ENCODE measurements at regions of chr11 and their contacts with region 1.

Region 1: DNA sequence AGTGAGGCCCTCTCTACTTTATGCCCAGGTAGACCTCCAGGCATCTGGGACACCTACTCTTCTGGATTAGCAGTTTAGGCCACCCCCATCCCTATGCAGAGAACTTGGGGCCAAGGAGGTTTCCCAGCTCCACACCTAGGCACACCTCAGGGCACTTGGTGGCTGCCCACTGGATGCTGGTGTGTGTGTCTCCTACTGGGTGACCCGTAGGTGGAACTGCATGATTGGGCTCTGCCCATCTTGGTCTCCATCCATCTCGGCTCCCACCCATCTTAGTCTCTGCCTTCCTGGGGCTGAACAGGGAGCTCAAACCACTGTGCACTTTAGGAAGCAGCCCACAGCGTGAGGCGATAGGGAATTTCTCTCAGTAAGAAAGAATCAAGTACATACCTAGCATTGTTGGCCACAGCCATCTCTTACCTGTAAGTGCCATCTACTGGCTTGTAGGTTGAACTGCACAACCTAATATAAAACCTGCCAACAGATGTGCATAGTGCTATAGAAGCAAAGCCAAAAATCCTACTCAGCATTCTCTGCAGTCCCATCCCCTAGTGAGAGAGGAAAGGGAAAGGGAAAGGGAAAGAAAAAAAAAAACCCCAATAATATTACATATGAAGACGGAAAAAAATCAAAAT is 61.6 kb upstream of the PTPN5 start:
- DNase-seq: peak in 1 of 2 experiments; percentile 62
- H3K4me3 ChIP-seq: no peak overlapping the region
- H3K27ac ChIP-seq: no peak overlapping the region
- H3K4me1 ChIP-seq: no peaks in the 10 kb centered on the region
- H3K27me3 ChIP-seq: peaks cover 32% of the 10 kb centered on the region
- CTCF ChIP-seq: peak; percentile 88

Region 2: DNA sequence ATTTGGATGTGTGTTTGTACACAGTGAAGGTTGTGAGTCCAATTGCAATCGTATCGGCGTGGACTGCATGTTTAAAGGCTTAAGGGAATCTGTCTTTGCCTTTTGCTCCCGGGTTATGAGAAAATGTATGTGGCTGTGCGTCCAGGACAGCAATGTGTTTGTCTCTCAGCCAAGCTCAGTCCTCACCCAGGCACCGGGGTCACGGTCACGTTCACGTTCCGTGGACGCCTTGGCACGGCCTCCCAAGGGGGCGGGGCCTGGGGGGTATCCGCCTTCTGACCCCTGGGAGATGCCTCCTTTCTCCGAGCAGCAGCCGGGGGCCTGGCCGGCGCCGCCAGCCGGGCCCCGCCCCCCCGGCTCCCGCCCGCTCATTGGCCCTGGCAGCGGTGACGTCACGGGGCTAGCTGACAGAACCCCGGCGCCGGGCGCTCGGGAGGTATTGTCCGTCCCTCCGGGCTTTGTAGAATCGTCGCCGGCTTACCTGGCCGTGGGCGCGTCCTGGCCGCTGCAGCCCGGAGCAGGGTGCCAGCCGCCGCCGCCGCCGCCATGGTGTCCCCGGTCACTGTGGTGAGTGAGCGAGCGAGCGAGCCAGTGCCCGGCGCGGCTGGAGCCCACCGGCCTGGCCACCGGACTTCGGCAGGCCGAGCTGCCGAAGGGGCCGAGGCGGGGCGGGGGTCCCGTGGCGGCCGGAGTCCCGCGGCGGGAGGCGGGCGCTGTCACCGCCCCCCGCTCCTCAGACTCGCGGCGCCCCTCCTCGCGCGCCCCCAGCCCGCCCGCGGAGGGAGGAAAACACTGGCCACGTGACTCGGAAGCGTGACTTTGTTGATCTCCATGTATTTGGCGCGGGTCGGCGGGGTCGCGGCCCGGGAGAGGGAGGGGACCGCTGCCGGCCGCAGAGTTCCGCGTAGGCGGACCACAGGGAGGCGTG is 154.6 kb before region 1 on chr11 and contains the start of gene TMEM86A:
- CTCF ChIA-PET with region 1: no interaction called
- POLR2A ChIA-PET with region 1: no interaction called
- intact Hi-C with region 1: no loop called
- DNase-seq: peak; percentile 72 to 90
- H3K4me3 ChIP-seq: peak within 1 kb of the TSS; percentile 81
- H3K27ac ChIP-seq: no peak within 1 kb of the TSS
- H3K4me1 ChIP-seq: peaks cover 35% of the 10 kb centered on the region
- H3K27me3 ChIP-seq: no peaks in the 10 kb centered on the region
- CTCF ChIP-seq: no peak
- total RNA-seq, gene TMEM86A: 1.4 and 2.1 TPM in 2 replicates

Region 3: DNA sequence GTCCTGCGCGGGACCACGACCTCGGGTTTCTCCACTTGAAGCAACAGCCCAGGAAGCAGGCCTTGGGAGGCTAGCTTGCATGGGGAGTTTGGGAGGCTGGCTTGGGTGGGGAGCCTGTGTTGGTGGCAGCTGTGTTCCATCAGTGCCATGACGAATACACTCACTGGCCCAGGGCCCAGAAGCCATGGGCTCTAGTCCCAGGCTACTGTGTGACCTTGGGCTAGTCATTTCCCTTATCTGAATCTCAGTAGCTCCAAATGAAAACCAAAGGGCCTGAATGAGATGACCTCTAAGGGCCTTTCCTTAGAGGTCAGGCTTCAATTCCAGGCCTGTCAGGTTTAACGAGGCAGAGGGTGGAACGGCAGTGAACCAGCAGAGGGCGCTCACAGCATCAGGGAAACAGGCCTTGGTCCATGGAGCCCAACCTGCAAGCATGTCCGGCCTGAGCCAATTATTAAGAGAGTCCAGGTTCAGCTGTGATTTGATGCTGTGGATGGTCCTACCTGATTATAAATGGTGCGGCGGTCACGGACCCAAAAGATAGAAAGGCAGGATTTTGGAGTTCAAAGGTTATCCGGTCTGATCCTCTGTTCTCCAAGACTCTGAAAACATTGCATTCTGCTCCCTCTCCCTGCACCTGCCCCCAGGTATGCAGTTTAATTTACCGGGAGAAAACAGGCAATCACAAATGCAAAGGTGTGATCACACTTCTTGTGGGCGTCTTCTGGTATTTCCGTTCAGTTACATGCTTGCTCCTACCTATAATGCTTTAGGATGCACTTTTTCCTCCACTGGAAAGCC is 77.5 kb before region 1 on chr11:
- CTCF ChIA-PET with region 1: no interaction called
- POLR2A ChIA-PET with region 1: no interaction called
- intact Hi-C with region 1: loop called (anchors 1 kb)
- DNase-seq: peak; percentile 52 to 69
- H3K4me3 ChIP-seq: no peak overlapping the region
- H3K27ac ChIP-seq: no peak overlapping the region
- H3K4me1 ChIP-seq: no peaks in the 10 kb centered on the region
- H3K27me3 ChIP-seq: peaks cover 23% of the 10 kb centered on the region
- CTCF ChIP-seq: peak; percentile 92